GM10248 (cell line): ENCODE measurements at regions of chr5 and their contacts with region 1.

Region 1: DNA sequence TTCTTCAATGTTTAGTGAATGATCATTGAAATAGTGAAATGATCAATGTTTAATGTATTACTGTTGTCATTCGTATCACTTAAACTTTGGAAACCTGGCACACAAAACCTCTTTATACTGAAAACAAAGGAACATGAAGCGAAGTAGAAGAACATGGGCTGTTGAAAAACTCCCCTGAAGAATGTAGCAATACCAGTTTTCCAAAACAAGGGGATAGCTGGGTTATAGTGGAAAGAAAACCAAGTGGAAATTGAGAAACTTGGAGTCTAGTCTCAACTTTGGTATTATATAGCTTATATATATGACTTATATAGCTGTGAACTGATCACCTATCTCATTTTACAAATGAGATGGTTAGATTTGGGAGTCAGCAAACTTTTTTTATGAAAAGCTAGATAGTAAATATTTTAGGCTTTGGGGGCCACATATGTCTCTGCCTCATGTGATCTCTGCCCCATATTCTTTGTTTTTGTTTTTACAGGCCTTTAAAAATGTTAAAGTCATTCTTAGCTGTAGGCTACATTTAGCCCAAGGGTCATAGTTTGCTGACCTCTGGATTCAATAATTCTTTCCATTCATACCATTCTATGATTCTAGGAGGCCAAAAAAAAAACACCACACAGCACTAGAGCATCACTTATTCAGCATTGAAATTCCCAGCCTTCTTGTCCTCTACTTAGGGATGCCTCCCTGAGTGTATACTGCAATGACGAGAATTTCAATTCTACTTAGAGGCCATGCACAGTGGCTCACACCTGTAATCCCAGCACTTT is 16.8 kb downstream of the PTCD2 start:
- DNase-seq: no peak
- CTCF ChIP-seq: no peak

Region 2: DNA sequence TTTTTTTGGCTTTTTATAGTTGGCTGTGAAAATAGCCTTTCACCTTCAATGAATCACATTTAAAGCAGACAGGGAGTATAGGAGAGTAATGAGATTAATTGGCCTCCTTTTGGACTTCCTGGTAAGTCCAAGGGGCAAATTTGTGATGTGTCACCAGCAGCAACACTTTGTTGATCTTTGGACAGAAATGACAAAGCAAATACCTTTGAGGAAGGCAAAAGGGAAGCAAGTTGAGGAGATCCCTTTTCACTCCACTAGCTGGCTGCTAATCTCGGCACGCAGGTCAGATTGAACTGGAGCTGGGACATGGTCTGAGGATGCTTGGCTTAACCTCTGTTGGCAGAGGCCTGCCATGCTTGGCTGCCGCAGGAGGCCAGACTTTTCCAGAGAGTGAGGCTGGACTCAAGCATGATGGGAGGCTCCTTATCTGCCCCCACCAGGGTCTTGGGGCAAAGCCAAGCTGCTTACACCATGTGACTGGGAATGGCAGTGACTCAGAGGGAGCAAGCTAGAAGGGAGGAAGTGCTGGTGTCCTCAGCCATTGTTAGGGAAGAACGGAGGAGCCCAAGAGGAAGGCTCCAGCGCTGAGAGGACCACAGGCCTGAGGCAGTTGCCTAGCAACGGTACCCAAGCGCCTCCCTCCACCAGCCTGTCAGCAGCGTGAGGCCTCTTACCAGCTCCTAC is 404.2 kb before region 1 on chr5:
- CTCF ChIA-PET with region 1: no interaction called
- POLR2A ChIA-PET with region 1: no interaction called
- DNase-seq: no peak
- CTCF ChIP-seq: no peak

Region 3: GRCh38 chr5:72355706-72356299 is 18.8 kb after region 1 on chr5:
- CTCF ChIA-PET with region 1: interaction called, 11 read pairs
- POLR2A ChIA-PET with region 1: no interaction called
- DNase-seq: no peak
- CTCF ChIP-seq: peak; percentile 33